K562 (cell line): ENCODE measurements at regions of chr6 and their contacts with region 1.

Region 1: GRCh38 chr6:29834564-29835436 is 7.2 kb downstream of the HLA-G start:
- DNase-seq: peak; percentile 30 to 44 (median 42)
- ATAC-seq: peak; percentile 88
- H3K4me3 ChIP-seq: no peak overlapping the region
- H3K27ac ChIP-seq: no peak overlapping the region
- H3K4me1 ChIP-seq: no peaks in the 10 kb centered on the region
- H3K27me3 ChIP-seq: peaks cover 0 to 12% of the 10 kb centered on the region in 2 experiments; a peak in 4 of 5 replicates
- CTCF ChIP-seq: peak; percentile 73 to 83 (median 75)
- EP300 ChIP-seq: no peak
- POLR2A ChIP-seq: no peak
- RAD21 ChIP-seq: peak; percentile 48 to 51

Region 2: GRCh38 chr6:29752451-29753308 is 82.1 kb before region 1 on chr6:
- CTCF ChIA-PET with region 1: interaction called, 3 read pairs
- POLR2A ChIA-PET with region 1: no interaction called
- in situ Hi-C with region 1: loop called (anchors 25 kb)
- intact Hi-C with region 1: loop called (anchors 5 kb)
- DNase-seq: peak; percentile 83 to 95 (median 88)
- ATAC-seq: peak; percentile 91
- H3K4me3 ChIP-seq: peak overlapping the region; percentile 51
- H3K27ac ChIP-seq: peak overlapping the region; percentile 68
- H3K4me1 ChIP-seq: peaks cover 14 to 30% of the 10 kb centered on the region in 2 experiments
- H3K27me3 ChIP-seq: peaks cover 0 to 4% of the 10 kb centered on the region in 2 experiments; a peak in 2 of 5 replicates
- CTCF ChIP-seq: peak; percentile 99 to 100 (median 100)
- EP300 ChIP-seq: no peak
- POLR2A ChIP-seq: peak; percentile 52; the same call in 1 of the 2 replicates
- RAD21 ChIP-seq: peak; percentile 75 to 90